B cell (primary cell): ENCODE measurements at regions of chr9 and their contacts with region 1.

Region 1: GRCh38 chr9:136700959-136701667 is 11.3 kb upstream of the DIPK1B start:
- DNase-seq: peak; percentile 87
- ATAC-seq: peak; percentile 81
- H3K4me3 ChIP-seq: peak overlapping the region in 4 of 5 experiments; percentile 9 to 52 (median 27)
- H3K4me3 Mint-ChIP-seq: peak overlapping the region; percentile 87
- H3K27ac ChIP-seq: peak overlapping the region; percentile 3 to 79
- H3K27ac Mint-ChIP-seq: peak overlapping the region; percentile 90
- H3K4me1 ChIP-seq: peaks cover 31 to 48% of the 10 kb centered on the region in 2 donors
- H3K4me1 Mint-ChIP-seq: peaks cover 37% of the 10 kb centered on the region
- H3K27me3 ChIP-seq: peaks cover 0 to 21% (median 3%) of the 10 kb centered on the region in 4 experiments
- H3K27me3 Mint-ChIP-seq: peaks cover 14% of the 10 kb centered on the region
- CTCF ChIP-seq: no peak

Region 2: GRCh38 chr9:136757328-136757727 is 56.2 kb after region 1 on chr9:
- CTCF ChIA-PET with region 1: no interaction called
- POLR2A ChIA-PET with region 1: interaction called, 8 read pairs
- intact Hi-C with region 1: loop called (anchors 2 kb)
- DNase-seq: no peak
- ATAC-seq: peak; percentile 54
- H3K4me3 ChIP-seq: no peak overlapping the region
- H3K4me3 Mint-ChIP-seq: peak overlapping the region; percentile 81
- H3K27ac ChIP-seq: peak overlapping the region; percentile 50 to 80
- H3K27ac Mint-ChIP-seq: peak overlapping the region; percentile 95
- H3K4me1 ChIP-seq: peaks cover 61 to 79% of the 10 kb centered on the region in 2 donors
- H3K4me1 Mint-ChIP-seq: peaks cover 56% of the 10 kb centered on the region
- H3K27me3 ChIP-seq: no peaks in the 10 kb centered on the region
- H3K27me3 Mint-ChIP-seq: no peaks in the 10 kb centered on the region
- CTCF ChIP-seq: no peak

Region 3: DNA sequence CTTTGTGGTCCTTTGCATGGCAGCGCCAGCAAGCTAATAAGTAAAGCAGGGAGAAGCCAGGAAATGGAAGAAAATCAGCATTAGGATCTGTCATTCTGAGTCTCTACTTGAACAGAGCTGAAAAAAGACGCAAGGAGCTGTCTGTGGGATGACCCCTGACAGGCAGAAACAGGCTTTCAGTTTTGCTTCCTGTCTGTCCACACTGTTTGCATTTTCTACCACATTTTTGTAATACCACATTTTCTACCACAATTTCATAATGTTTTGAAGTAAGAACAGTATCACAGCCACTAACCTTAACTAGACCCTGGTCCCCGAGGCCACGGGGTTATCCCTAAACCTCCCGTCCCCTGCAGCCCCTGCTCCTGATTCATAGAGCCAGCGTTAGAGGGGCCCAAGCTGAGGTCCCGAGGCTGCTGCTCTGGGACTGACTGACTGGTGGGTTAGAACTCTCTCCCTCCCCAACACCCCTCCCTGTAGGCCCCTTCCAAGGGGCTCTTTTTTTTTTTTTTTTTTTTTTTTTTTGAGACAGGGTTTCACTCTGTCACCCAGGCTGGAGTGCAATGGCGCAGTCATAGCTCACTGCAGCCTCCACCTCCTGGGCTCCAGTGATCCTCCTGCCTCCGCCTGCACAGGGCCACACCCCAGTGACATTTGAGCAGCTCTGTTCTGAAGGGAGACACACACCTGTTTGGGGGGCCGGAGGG is 299.2 kb after region 1 on chr9:
- CTCF ChIA-PET with region 1: no interaction called
- POLR2A ChIA-PET with region 1: interaction called, 18 read pairs
- intact Hi-C with region 1: no loop called
- DNase-seq: peak; percentile 68
- ATAC-seq: peak; percentile 54
- H3K4me3 ChIP-seq: peak overlapping the region in 2 of 5 experiments; percentile 41 to 50
- H3K4me3 Mint-ChIP-seq: peak overlapping the region; percentile 81
- H3K27ac ChIP-seq: peak overlapping the region; percentile 4 to 74
- H3K27ac Mint-ChIP-seq: peak overlapping the region; percentile 87
- H3K4me1 ChIP-seq: peaks cover 46 to 58% of the 10 kb centered on the region in 2 donors
- H3K4me1 Mint-ChIP-seq: peaks cover 44% of the 10 kb centered on the region
- H3K27me3 ChIP-seq: peaks cover 0 to 4% (median 0%) of the 10 kb centered on the region in 4 experiments
- H3K27me3 Mint-ChIP-seq: peaks cover 3% of the 10 kb centered on the region
- CTCF ChIP-seq: no peak